CD4-positive, alpha-beta memory T cell (primary cell): ENCODE measurements at regions of chr4 and their contacts with region 1.

Region 1: GRCh38 chr4:98995183-98996055 is at the start of gene METAP1:
- DNase-seq: peak; percentile 95 to 98 (median 97)
- H3K4me3 ChIP-seq: peak within 1 kb of the TSS; percentile 80 to 85
- H3K4me3 Mint-ChIP-seq: peak within 1 kb of the TSS; percentile 78 to 97 (median 91)
- H3K27ac ChIP-seq: peak within 1 kb of the TSS; percentile 81
- H3K27ac Mint-ChIP-seq: peak within 1 kb of the TSS; percentile 92 to 100 (median 99)
- H3K4me1 ChIP-seq: peaks cover 39% of the 10 kb centered on the region
- H3K4me1 Mint-ChIP-seq: peaks cover 23 to 47% (median 35%) of the 10 kb centered on the region in 4 donors
- H3K27me3 ChIP-seq: no peaks in the 10 kb centered on the region
- H3K27me3 Mint-ChIP-seq: no peaks in the 10 kb centered on the region
- total RNA-seq, gene METAP1: 36.4 to 36.7 TPM

Region 2: DNA sequence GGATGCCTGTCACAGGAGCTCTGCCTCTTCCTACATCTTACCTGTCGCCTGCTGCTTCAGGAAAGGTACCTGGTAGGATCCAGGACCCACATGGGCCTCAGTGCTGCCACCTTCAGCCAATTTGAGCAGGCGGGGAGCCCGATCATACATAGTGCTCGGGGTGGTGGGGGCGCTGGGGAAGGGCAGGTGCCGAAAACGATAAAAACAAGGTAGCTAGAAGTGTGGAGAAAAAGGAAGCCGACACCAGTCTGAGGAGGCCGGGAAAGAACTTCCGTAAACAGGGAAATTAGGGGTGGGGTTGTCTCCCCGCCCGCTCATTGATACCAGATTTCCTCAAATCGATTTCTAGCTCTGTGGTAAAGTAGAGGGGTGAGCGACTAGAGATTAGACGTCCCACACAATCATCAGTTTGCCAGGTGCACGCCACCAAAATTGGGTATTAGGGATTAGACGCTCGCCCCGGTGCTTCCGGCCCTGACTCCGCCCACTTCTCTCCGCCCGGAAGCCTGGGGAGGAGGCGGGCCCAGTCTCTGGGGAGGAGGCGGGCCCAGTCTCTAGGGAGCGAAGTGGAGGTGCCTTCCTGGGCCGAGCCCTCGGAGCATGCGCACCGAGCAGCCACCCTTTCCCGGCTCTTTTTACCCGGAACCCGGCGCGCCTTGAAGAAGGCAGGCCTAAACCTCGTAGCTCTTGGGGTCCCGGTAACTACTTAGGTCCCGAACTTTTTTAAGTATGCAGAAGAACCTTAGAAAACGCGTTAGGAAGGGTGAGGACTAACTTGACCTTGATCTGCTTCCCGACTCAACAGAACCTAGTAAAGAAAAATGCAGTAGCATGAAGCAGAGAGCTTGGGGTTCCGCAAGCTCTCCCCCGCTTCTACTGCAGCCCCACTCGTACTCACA is 852.2 kb before region 1 on chr4 and contains the start of gene STPG2:
- CTCF ChIA-PET with region 1: interaction called, 22 read pairs
- POLR2A ChIA-PET with region 1: interaction called, 25 read pairs
- intact Hi-C with region 1: loop called (anchors 1 kb)
- DNase-seq: peak; percentile 91 to 92 (median 92)
- H3K4me3 ChIP-seq: peak within 1 kb of the TSS; percentile 67 to 69
- H3K4me3 Mint-ChIP-seq: peak within 1 kb of the TSS; percentile 88 to 96 (median 93)
- H3K27ac ChIP-seq: peak within 1 kb of the TSS; percentile 74
- H3K27ac Mint-ChIP-seq: peak within 1 kb of the TSS; percentile 97 to 98 (median 97)
- H3K4me1 ChIP-seq: peaks cover 23% of the 10 kb centered on the region
- H3K4me1 Mint-ChIP-seq: peaks cover 16 to 35% (median 23%) of the 10 kb centered on the region in 4 donors
- H3K27me3 ChIP-seq: no peaks in the 10 kb centered on the region
- H3K27me3 Mint-ChIP-seq: no peaks in the 10 kb centered on the region
- total RNA-seq, gene STPG2: 0.47 to 0.84 TPM

Region 3: DNA sequence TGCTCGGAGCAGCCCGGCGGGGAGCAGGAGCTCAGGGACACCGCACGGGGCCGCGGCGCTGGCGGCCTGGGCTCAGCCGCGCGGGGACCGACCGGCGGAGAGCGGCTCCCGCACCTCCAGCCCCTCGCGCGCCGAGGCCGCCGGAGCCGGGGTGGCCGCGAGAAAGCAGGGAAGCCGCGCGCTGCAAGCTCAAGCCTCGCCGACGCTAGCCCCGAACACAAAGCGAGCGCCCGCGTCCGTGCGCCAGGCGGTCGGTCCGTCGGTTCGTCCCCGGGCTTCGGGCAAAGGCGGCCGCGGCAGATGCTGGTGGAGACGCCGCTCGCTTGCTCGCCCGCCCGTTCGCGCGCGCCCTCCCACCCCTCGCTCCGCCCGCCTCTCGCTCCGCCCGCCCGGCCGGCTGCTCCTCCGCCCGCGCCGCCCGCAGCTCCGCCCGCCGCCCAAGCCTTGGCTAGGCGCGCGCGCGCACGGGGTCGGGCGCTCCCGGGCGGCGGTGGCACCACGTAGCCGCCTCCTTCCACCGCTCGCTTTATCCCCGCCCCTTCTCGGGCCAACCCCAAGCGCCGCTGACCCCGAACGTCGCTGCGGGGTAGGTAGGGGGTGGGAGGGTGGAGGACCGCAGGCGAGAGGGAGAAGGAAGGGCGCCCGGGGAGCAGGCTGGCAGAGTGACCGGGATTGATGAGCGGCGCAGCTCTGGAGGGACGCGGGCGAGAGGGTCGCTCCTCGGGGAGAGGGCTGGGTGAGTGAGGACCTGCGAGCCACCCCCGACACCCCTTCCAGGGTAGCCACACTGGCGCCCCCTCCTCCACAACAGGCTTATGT is 336.9 kb before region 1 on chr4 and contains the start of gene TSPAN5:
- CTCF ChIA-PET with region 1: interaction called, 3 read pairs
- POLR2A ChIA-PET with region 1: interaction called, 11 read pairs
- intact Hi-C with region 1: loop called (anchors 2 kb)
- DNase-seq: peak; percentile 77 to 83 (median 80)
- H3K4me3 ChIP-seq: peak within 1 kb of the TSS; percentile 95 to 99
- H3K4me3 Mint-ChIP-seq: peak within 1 kb of the TSS; percentile 91 to 100 (median 96)
- H3K27ac ChIP-seq: peak within 1 kb of the TSS; percentile 60
- H3K27ac Mint-ChIP-seq: peak within 1 kb of the TSS; percentile 59 to 96 (median 92)
- H3K4me1 ChIP-seq: peaks cover 82% of the 10 kb centered on the region
- H3K4me1 Mint-ChIP-seq: peaks cover 55 to 91% (median 74%) of the 10 kb centered on the region in 4 donors
- H3K27me3 ChIP-seq: no peaks in the 10 kb centered on the region
- H3K27me3 Mint-ChIP-seq: no peaks in the 10 kb centered on the region
- total RNA-seq, gene TSPAN5: 16.8 to 17.4 TPM

Region 4: DNA sequence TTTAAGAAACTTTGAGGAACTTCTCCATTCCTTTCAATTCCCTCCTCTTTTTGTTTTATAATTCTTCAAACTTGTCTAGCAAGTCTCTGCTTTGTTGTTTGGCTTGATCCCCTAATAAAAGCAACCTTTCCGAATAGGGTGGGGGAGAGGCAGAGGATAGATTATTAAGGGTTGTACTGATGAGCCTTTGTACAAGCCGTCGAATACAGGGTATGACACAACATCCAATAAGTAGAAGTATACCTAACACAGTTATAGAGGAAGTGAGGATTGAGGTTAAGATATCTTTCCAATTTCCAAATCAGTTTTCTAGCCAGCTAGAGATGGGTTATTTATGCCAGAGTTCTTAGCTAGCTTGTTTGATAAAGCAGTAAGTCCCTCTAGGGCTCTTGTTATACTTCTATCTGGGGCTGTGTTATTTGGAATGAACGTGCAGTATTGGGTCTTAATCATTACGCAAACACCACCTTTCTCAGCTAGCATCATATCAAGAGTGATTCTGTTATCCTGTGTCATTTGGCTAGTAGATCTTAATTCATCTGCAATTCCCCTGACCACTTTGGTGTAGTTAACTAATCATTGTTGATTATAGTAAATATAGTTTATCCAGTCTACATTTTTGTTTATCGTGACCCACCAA is 18.6 kb after region 1 on chr4:
- CTCF ChIA-PET with region 1: interaction called, 17 read pairs
- POLR2A ChIA-PET with region 1: no interaction called
- intact Hi-C with region 1: no loop called
- DNase-seq: no peak
- H3K4me3 ChIP-seq: no peak overlapping the region
- H3K4me3 Mint-ChIP-seq: no peak overlapping the region
- H3K27ac ChIP-seq: no peak overlapping the region
- H3K27ac Mint-ChIP-seq: no peak overlapping the region
- H3K4me1 ChIP-seq: no peaks in the 10 kb centered on the region
- H3K4me1 Mint-ChIP-seq: peaks cover 16 to 58% (median 48%) of the 10 kb centered on the region in 4 donors
- H3K27me3 ChIP-seq: no peaks in the 10 kb centered on the region
- H3K27me3 Mint-ChIP-seq: no peaks in the 10 kb centered on the region

Region 5: DNA sequence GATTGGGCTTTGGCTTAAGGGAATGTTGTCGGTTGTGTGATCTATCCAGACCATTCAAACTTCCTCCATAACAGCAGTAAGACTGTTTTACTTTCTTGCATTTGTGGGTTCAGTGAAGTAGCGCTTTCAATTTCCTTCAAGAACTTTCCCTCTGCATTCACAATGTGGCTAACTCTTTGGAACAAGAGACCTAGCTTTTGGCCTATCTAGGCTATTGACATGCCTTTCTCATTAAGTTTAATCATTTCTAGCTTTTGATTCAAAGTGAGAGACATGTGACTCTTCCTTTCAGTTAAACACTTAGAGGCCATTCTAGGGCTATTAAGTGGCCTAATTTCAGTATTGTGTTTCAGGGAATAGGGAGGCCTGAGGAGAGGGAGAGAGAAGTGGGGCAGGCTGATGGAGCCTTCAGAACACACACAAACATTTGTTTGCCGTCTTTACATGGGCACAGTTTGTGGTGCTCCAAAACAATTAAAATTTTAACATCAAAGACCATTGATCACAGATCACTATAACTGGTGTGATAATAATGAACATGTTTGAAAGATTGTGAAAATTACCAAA is 59.1 kb after region 1 on chr4:
- CTCF ChIA-PET with region 1: interaction called, 373 read pairs
- POLR2A ChIA-PET with region 1: interaction called, 66 read pairs
- intact Hi-C with region 1: loop called (anchors 1 kb)
- DNase-seq: no peak
- H3K4me3 ChIP-seq: no peak overlapping the region
- H3K4me3 Mint-ChIP-seq: no peak overlapping the region
- H3K27ac ChIP-seq: no peak overlapping the region
- H3K27ac Mint-ChIP-seq: peak overlapping the region in 5 of 7 donors; percentile 37 to 88 (median 86)
- H3K4me1 ChIP-seq: peaks cover 7% of the 10 kb centered on the region
- H3K4me1 Mint-ChIP-seq: peaks cover 15 to 33% (median 23%) of the 10 kb centered on the region in 4 donors
- H3K27me3 ChIP-seq: no peaks in the 10 kb centered on the region
- H3K27me3 Mint-ChIP-seq: no peaks in the 10 kb centered on the region

Region 6: DNA sequence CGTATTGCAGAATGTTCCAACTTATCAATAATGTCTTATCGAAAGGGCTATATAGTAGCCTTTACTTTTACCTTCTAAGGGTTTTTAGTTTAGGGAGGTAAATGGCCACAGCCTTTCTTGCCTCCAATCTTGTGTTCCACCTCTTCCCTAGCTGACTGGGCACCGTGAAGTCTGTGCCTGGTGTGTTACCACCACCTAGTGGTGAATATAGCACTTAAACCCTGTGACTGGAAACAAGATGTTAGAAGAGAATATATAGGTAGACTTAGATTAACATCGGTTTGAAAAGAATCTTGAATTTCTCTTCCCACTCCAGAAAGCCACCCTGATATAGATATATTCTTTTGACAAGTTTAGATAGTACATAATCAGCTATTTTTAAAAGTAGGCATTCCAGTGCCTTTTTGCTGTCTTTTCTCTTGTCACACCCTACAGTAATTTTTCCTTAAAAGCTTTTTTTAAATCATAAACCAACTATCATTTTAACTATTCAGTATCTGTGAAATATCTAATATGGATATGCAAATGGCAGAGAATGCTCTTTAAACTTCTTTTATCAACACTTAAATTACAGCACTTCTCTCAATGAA is 467.6 kb after region 1 on chr4:
- CTCF ChIA-PET with region 1: no interaction called
- POLR2A ChIA-PET with region 1: no interaction called
- intact Hi-C with region 1: loop called (anchors 1 kb)
- DNase-seq: peak; percentile 36 to 52 (median 44)
- H3K4me3 ChIP-seq: no peak overlapping the region
- H3K4me3 Mint-ChIP-seq: no peak overlapping the region
- H3K27ac ChIP-seq: no peak overlapping the region
- H3K27ac Mint-ChIP-seq: peak overlapping the region in 1 of 7 donors; percentile 10
- H3K4me1 ChIP-seq: no peaks in the 10 kb centered on the region
- H3K4me1 Mint-ChIP-seq: no peaks in the 10 kb centered on the region
- H3K27me3 ChIP-seq: no peaks in the 10 kb centered on the region
- H3K27me3 Mint-ChIP-seq: peaks cover 13 to 18% of the 10 kb centered on the region in 2 donors

Region 7: DNA sequence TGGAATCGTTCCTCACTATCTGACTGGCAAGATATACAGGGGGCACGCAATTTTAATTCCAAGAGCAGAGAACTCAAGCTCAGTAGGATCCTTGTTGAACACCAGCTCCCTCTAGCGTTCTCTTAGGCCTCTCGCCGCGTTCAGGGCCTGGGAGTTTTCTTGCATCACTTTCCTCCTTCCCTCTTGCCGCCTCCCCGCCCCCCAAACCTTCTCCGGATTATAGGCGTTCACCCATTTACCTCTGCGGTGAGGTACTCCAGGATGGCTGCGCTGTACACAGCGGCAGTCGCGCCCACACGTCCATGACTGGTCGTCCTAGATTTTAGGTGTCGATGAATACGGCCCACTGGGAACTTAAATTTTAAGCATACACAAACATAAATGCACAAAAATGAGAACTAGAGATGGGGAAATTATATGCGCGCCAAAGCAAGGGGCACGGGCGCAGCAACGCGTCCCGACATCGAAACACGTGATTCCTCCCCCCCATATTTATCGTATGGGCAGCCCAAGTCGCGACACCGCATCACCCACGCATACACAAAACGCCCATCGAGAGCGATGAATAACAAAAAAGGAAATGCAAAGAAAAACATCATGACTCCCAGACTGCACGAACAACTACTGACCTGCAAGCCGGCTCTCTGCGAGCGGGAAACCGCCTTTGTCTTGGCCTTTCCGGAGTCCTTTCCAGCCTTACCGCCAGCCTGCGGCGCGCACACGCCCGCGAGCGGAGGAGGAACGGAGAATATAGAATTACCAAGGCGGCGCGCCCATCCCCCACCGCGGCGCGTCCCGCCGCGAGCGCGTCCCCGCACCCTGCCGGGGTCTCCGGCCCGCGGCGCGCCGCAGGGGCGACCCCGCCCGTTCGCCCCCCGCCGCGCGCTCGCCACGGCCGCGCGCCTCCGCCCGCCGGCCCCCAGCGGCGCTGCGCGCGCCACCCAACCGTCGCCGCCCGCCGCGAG is 953.9 kb after region 1 on chr4:
- CTCF ChIA-PET with region 1: interaction called, 4 read pairs
- POLR2A ChIA-PET with region 1: interaction called, 6 read pairs
- intact Hi-C with region 1: loop called (anchors 5 kb)
- DNase-seq: peak; percentile 87 to 94 (median 88)
- H3K4me3 ChIP-seq: peak overlapping the region; percentile 90 to 98
- H3K4me3 Mint-ChIP-seq: no peak overlapping the region
- H3K27ac ChIP-seq: peak overlapping the region; percentile 86
- H3K27ac Mint-ChIP-seq: no peak overlapping the region
- H3K4me1 ChIP-seq: peaks cover 53% of the 10 kb centered on the region
- H3K4me1 Mint-ChIP-seq: peaks cover 24 to 33% (median 32%) of the 10 kb centered on the region in 4 donors
- H3K27me3 ChIP-seq: no peaks in the 10 kb centered on the region
- H3K27me3 Mint-ChIP-seq: no peaks in the 10 kb centered on the region